Esophagus squamous epithelium (tissue), 5 donors: ENCODE measurements at regions of chr12 and their contacts with region 1.

Region 1: DNA sequence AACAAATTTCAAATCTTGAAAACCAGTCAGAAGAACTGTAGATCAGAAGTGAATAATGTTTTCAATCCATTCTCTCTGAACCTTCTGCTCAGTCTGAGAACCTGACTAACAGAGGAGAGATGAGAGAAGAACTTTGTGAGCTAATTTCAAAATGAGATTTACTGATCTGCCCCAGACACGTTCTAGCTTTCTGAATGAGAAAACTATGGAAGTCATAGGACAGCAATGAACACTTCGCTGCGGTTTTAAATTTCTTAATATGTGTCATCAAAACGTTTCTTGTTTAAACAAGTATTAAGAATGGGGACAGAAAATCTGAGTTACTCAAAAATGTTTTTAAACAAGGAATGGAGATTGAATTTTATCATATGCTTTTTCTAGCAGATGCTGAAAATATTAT is 66.6 kb upstream of the FAR2 start:
- DNase-seq: no peak
- H3K4me3 ChIP-seq: no peak overlapping the region
- H3K27ac ChIP-seq: no peak overlapping the region
- H3K4me1 ChIP-seq: no peaks in the 10 kb centered on the region
- H3K27me3 ChIP-seq: no peaks in the 10 kb centered on the region
- CTCF ChIP-seq: no peak
- POLR2A ChIP-seq: no peak

Region 2: DNA sequence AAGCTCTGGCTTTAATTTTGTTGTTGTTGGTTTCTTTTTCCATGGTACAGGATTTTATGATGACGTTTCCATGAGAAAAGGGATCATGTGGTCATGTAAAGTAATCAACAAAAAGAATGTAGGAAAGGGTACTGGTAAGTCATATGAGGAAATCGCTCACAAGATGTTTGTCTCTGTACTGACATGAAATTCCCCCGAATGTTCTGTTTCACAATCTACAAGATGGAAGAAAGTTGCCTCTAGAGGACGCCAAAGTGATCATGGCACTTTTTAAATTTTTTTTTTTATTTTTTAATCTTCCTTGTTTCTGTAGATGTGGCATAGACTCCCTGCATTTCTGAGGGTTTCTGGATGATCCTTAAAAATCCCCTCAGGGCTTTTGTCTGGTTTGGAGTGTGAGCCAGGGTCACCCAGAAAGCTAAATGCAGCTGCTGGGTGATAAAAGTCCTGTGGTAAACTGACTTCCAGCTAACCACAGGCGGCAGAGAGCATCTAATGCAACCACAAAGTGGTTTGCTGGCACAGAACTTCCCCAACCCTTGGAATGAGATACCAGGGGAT is 498.7 kb before region 1 on chr12:
- intact Hi-C with region 1: no loop called
- DNase-seq: no peak
- H3K4me3 ChIP-seq: no peak overlapping the region
- H3K27ac ChIP-seq: no peak overlapping the region
- H3K4me1 ChIP-seq: peaks cover 0 to 3% (median 0%) of the 10 kb centered on the region in 3 donors
- H3K27me3 ChIP-seq: no peaks in the 10 kb centered on the region
- CTCF ChIP-seq: peak in 1 of 6 experiments; percentile 3
- POLR2A ChIP-seq: no peak

Region 3: GRCh38 chr12:28693565-28694219 is 388.8 kb before region 1 on chr12:
- intact Hi-C with region 1: no loop called
- DNase-seq: no peak
- H3K4me3 ChIP-seq: no peak overlapping the region
- H3K27ac ChIP-seq: no peak overlapping the region
- H3K4me1 ChIP-seq: no peaks in the 10 kb centered on the region
- H3K27me3 ChIP-seq: no peaks in the 10 kb centered on the region
- CTCF ChIP-seq: no peak
- POLR2A ChIP-seq: no peak

Region 4: GRCh38 chr12:29309320-29309902 is 226.9 kb after region 1 on chr12:
- intact Hi-C with region 1: loop called (anchors 5 kb)
- DNase-seq: no peak
- H3K4me3 ChIP-seq: no peak overlapping the region
- H3K27ac ChIP-seq: no peak overlapping the region
- H3K4me1 ChIP-seq: no peaks in the 10 kb centered on the region
- H3K27me3 ChIP-seq: no peaks in the 10 kb centered on the region
- CTCF ChIP-seq: peak in 2 of 6 experiments; percentile 9 to 37
- POLR2A ChIP-seq: no peak